WTC11 (cell line): ENCODE measurements at regions of chr22 and their contacts with region 1.

Region 1: GRCh38 chr22:25027959-25028840 is 75.7 kb downstream of the KIAA1671 start:
- DNase-seq: peak; percentile 79
- ATAC-seq: peak; percentile 84
- H3K4me3 Mint-ChIP-seq: no peak overlapping the region
- H3K27ac Mint-ChIP-seq: peak overlapping the region; percentile 29; the same call in 1 of the 2 replicates
- H3K4me1 Mint-ChIP-seq: peaks cover 18% of the 10 kb centered on the region
- H3K27me3 Mint-ChIP-seq: no peaks in the 10 kb centered on the region
- CTCF ChIP-seq: peak; percentile 24; the same call in 1 of the 2 replicates

Region 2: DNA sequence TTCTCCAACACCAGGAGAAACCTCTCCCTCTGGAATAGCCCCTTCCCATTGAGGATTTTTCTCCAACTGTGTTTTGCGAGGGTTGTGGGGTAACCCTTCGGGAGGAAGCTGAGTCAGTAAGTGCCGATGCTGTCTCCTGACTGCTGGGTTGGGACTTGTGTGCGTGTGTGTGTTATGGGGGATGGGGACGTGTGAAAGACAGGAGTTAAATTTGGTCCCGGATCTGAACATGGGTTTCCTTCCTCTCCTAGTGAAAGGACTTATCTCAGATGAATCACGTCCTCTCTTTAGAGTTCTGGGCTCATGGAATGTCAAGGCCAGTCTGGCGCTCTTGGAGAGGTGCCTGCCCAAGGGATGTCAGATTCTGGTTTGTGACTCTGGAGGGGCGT is 42.4 kb before region 1 on chr22:
- CTCF ChIA-PET with region 1: interaction called, 12 read pairs
- POLR2A ChIA-PET with region 1: no interaction called
- DNase-seq: no peak
- ATAC-seq: no peak
- H3K4me3 Mint-ChIP-seq: no peak overlapping the region
- H3K27ac Mint-ChIP-seq: peak overlapping the region; percentile 19
- H3K4me1 Mint-ChIP-seq: peaks cover 32% of the 10 kb centered on the region
- H3K27me3 Mint-ChIP-seq: no peaks in the 10 kb centered on the region
- CTCF ChIP-seq: no peak

Region 3: GRCh38 chr22:24996420-24996952 is 31.7 kb before region 1 on chr22:
- CTCF ChIA-PET with region 1: interaction called, 13 read pairs
- POLR2A ChIA-PET with region 1: no interaction called
- DNase-seq: peak; percentile 61
- ATAC-seq: peak; percentile 94
- H3K4me3 Mint-ChIP-seq: peak overlapping the region; percentile 32
- H3K27ac Mint-ChIP-seq: peak overlapping the region; percentile 91
- H3K4me1 Mint-ChIP-seq: peaks cover 41% of the 10 kb centered on the region
- H3K27me3 Mint-ChIP-seq: no peaks in the 10 kb centered on the region
- CTCF ChIP-seq: no peak